CD8-positive, alpha-beta T cell (primary cell): ENCODE measurements at regions of chr5 and their contacts with region 1.

Region 1: DNA sequence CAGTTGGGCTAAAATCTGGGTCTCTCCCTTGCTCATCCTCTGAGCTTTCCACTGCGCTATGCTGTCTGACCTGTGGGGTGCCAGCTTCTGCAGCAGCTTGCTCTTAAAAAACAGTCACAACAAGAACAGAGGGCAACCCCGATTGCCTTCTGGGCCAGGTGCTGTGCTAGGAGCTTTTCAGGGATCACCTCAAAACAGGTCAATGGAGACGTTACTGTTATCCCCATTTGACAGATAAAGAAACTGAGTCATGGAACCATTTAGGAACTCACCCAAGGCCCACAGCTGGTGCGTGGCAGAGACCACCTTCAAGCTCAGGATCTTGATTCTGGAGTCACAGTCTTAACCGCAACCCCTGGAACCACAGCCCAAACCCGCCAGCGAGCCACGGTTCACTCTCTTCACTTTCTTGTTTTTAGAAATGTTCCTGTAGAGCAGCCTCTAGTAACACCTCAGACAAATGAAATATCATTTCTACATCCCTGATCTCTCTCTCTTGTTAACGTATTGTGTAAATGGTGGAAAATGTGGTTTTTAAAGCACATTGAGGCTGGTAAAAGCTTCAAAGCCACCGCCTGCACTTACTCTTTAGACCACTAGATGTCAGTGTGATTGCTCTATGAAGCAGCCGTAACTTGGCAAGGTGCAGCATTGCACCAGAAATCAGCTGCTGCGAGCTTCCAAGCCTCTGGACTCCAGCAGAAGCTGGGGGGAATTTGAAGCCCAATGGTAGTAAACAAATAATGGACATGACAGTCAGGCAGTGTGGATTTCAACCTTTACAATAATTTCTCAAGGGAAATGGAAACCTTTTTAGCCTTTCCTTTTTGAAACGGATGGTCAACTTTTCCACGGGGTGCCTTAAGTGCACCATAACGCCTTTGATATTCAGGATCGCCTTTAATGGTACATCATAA is 1.7 kb downstream of the FYB1 start:
- DNase-seq: peak; percentile 56 to 92 (median 81)
- ATAC-seq: peak; percentile 61
- H3K4me3 ChIP-seq: peak overlapping the region; percentile 41 to 59
- H3K4me3 Mint-ChIP-seq: peak overlapping the region; percentile 79
- H3K27ac ChIP-seq: peak overlapping the region; percentile 53 to 70
- H3K27ac Mint-ChIP-seq: peak overlapping the region; percentile 92
- H3K4me1 ChIP-seq: peaks cover 47% of the 10 kb centered on the region
- H3K4me1 Mint-ChIP-seq: peaks cover 74% of the 10 kb centered on the region
- H3K27me3 ChIP-seq: no peaks in the 10 kb centered on the region
- H3K27me3 Mint-ChIP-seq: no peaks in the 10 kb centered on the region
- CTCF ChIP-seq: peak; percentile 96

Region 2: GRCh38 chr5:39137391-39138181 is 80.0 kb before region 1 on chr5:
- CTCF ChIA-PET with region 1: interaction called, 14 read pairs
- POLR2A ChIA-PET with region 1: interaction called, 4 read pairs
- intact Hi-C with region 1: no loop called
- DNase-seq: peak in 2 of 9 experiments; percentile 15 to 39
- ATAC-seq: peak; percentile 34
- H3K4me3 ChIP-seq: no peak overlapping the region
- H3K4me3 Mint-ChIP-seq: no peak overlapping the region
- H3K27ac ChIP-seq: peak overlapping the region in 1 of 2 experiments; percentile 0
- H3K27ac Mint-ChIP-seq: peak overlapping the region; percentile 82
- H3K4me1 ChIP-seq: peaks cover 5% of the 10 kb centered on the region
- H3K4me1 Mint-ChIP-seq: peaks cover 37% of the 10 kb centered on the region
- H3K27me3 ChIP-seq: no peaks in the 10 kb centered on the region
- H3K27me3 Mint-ChIP-seq: no peaks in the 10 kb centered on the region
- CTCF ChIP-seq: no peak

Region 3: GRCh38 chr5:39164529-39165402 is 52.9 kb before region 1 on chr5:
- CTCF ChIA-PET with region 1: interaction called, 15 read pairs
- POLR2A ChIA-PET with region 1: interaction called, 3 read pairs
- intact Hi-C with region 1: no loop called
- DNase-seq: peak in 2 of 9 experiments; percentile 56 to 70
- ATAC-seq: peak; percentile 73
- H3K4me3 ChIP-seq: no peak overlapping the region
- H3K4me3 Mint-ChIP-seq: peak overlapping the region; percentile 55
- H3K27ac ChIP-seq: peak overlapping the region; percentile 9 to 65
- H3K27ac Mint-ChIP-seq: peak overlapping the region; percentile 91
- H3K4me1 ChIP-seq: peaks cover 93% of the 10 kb centered on the region
- H3K4me1 Mint-ChIP-seq: peaks cover 90% of the 10 kb centered on the region
- H3K27me3 ChIP-seq: no peaks in the 10 kb centered on the region
- H3K27me3 Mint-ChIP-seq: no peaks in the 10 kb centered on the region
- CTCF ChIP-seq: no peak

Region 4: DNA sequence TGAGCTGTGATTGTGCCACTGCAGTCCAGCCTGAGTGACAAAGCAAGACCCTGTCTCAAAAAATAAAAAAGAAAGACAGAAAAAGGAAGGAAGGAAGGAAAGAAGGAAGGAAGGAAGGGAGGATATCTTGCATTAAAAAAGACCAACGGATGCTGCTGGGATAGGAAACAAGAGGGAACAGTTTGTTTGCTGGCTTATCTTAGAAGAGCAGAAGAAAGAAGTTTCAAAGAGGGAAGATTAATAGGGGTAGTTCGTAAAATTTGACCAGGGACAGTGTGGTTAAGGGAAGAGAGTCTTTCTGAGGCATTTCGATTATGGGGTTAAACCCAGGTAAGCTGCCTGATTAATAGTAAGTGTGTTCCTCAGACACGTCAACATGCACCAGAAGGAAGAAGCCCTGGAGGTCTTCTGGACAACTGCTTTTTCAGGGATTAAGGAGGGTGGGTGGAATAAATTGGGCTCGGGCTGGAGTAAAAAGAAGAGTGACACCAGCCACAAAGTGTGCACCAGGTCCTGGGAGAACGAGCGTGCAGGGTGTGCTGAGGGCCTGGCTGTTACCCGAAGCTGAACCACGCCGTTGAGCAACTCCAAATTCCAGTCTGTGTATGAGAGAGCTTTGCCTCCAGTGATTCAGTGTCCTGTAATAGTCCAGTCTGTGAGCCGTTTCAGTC is 23.0 kb before region 1 on chr5:
- CTCF ChIA-PET with region 1: interaction called, 127 read pairs
- POLR2A ChIA-PET with region 1: interaction called, 71 read pairs
- intact Hi-C with region 1: no loop called
- DNase-seq: peak in 1 of 9 experiments; percentile 41
- ATAC-seq: no peak
- H3K4me3 ChIP-seq: peak overlapping the region; percentile 12 to 28
- H3K4me3 Mint-ChIP-seq: peak overlapping the region; percentile 77
- H3K27ac ChIP-seq: peak overlapping the region; percentile 41 to 88
- H3K27ac Mint-ChIP-seq: peak overlapping the region; percentile 94
- H3K4me1 ChIP-seq: peaks cover 72% of the 10 kb centered on the region
- H3K4me1 Mint-ChIP-seq: peaks cover 76% of the 10 kb centered on the region
- H3K27me3 ChIP-seq: no peaks in the 10 kb centered on the region
- H3K27me3 Mint-ChIP-seq: no peaks in the 10 kb centered on the region
- CTCF ChIP-seq: no peak

Region 5: DNA sequence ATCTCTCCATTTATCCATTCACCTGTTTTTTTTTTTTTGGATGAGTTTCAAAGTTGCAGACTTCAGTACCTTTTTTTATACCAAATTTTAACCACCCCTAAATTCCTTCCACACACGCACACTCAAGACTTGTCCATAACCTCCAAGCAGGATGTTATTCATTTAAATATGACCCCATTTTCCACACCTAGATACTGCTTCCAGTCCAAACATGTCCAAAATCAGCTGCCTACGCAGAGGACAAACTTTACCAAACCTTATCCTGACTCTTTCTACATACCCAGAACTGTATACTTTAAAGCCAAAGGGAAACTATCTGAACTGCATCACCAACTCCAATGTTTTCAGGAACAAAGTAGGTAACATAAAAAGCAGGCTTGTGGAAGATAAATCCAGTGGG is 37.8 kb after region 1 on chr5:
- CTCF ChIA-PET with region 1: interaction called, 10 read pairs
- POLR2A ChIA-PET with region 1: no interaction called
- intact Hi-C with region 1: no loop called
- DNase-seq: no peak
- ATAC-seq: no peak
- H3K4me3 ChIP-seq: no peak overlapping the region
- H3K4me3 Mint-ChIP-seq: no peak overlapping the region
- H3K27ac ChIP-seq: no peak overlapping the region
- H3K27ac Mint-ChIP-seq: no peak overlapping the region
- H3K4me1 ChIP-seq: peaks cover 3% of the 10 kb centered on the region
- H3K4me1 Mint-ChIP-seq: peaks cover 34% of the 10 kb centered on the region
- H3K27me3 ChIP-seq: no peaks in the 10 kb centered on the region
- H3K27me3 Mint-ChIP-seq: no peaks in the 10 kb centered on the region
- CTCF ChIP-seq: no peak

Region 6: GRCh38 chr5:39680213-39680612 is 462.6 kb after region 1 on chr5:
- CTCF ChIA-PET with region 1: no interaction called
- POLR2A ChIA-PET with region 1: no interaction called
- intact Hi-C with region 1: no loop called
- DNase-seq: no peak
- ATAC-seq: no peak
- H3K4me3 ChIP-seq: no peak overlapping the region
- H3K4me3 Mint-ChIP-seq: no peak overlapping the region
- H3K27ac ChIP-seq: no peak overlapping the region
- H3K27ac Mint-ChIP-seq: no peak overlapping the region
- H3K4me1 ChIP-seq: no peaks in the 10 kb centered on the region
- H3K4me1 Mint-ChIP-seq: no peaks in the 10 kb centered on the region
- H3K27me3 ChIP-seq: no peaks in the 10 kb centered on the region
- H3K27me3 Mint-ChIP-seq: peaks cover 12% of the 10 kb centered on the region
- CTCF ChIP-seq: no peak